ENCODE measurements at regions of chr17 and their contacts with region 1.

Region 1: DNA sequence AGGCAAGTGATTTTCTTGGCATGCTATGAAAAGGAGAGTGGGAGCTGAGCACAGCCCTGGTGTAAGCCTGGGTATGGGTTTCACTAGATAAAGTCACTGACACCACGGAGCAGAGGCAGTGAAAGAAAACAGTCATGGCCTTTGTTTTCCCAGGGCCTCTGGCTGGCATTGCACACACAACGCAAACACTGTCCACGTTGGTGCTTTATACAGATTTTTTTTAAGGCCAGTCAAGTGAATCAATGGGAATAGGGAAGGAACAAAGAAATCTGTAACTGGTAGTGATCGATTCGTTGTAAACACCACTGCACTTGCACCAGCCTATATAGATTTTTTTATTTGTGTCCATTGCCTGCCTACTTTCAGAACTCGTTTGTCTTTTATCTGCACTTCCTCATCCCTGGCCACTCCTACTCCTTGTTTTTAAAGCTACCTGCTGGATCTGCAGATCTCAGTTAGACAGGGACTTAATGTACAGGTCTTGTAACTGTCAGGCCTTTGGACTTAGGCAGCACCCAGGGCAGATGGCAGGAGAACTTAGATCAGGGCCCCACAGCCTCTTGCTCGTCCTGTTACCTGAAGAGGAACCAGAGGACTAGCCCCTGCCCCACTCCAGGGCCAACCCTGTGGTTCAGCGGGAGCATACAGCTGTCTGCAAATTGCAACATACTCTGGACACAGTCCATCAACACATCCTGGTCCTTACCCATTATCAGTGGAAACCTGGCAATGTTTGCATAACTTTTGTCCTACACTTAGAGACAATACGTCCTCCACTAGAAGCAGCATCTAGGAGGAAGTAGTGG is 10.6 kb upstream of the TMIGD1 start:
- DNase-seq: no peak
- ATAC-seq: no peak
- H3K4me3 ChIP-seq: no peak overlapping the region
- H3K27ac ChIP-seq: no peak overlapping the region
- H3K4me1 ChIP-seq: peaks cover 16 to 21% of the 10 kb centered on the region in 2 experiments; a peak in 3 of 4 replicates
- H3K27me3 ChIP-seq: no peaks in the 10 kb centered on the region
- CTCF ChIP-seq: no peak
- POLR2A ChIP-seq: no peak
- RAD21 ChIP-seq: no peak

Region 2: DNA sequence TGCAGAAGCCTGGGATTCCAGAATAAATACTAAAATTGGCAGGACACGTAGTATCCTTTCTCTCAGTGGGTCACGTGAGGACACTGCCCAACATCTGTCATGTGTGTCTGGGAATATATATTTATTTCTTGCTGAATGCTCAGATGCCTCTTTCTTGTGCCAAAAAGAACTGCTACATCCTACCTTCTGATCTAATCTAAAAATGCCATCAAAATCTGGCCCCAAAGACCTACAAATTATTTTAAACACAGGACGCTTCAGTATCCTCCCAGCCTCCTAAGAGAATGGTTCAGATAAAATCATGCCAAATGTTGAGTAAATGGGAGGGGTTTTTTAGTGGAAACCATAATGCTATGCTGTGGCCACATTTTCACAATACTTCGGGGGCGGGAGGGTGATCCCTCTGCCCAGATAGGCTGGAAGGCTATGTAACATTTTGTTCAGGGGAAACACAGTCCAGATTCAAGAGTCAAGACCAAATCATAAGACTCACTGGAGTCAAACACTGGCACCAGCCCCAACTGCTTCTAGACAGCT is 698.9 kb before region 1 on chr17:
- CTCF ChIA-PET with region 1: no interaction called
- POLR2A ChIA-PET with region 1: no interaction called
- RAD21 ChIA-PET with region 1: no interaction called
- intact Hi-C with region 1: no loop called
- DNase-seq: no peak
- ATAC-seq: no peak
- H3K4me3 ChIP-seq: no peak overlapping the region
- H3K27ac ChIP-seq: no peak overlapping the region
- H3K4me1 ChIP-seq: no peaks in the 10 kb centered on the region; a peak in 1 of 4 replicates
- H3K27me3 ChIP-seq: no peaks in the 10 kb centered on the region
- CTCF ChIP-seq: no peak
- POLR2A ChIP-seq: no peak
- RAD21 ChIP-seq: no peak

Region 3: GRCh38 chr17:30188211-30188939 is 156.1 kb before region 1 on chr17:
- CTCF ChIA-PET with region 1: no interaction called
- POLR2A ChIA-PET with region 1: no interaction called
- RAD21 ChIA-PET with region 1: no interaction called
- intact Hi-C with region 1: no loop called
- DNase-seq: no peak
- ATAC-seq: no peak
- H3K4me3 ChIP-seq: no peak overlapping the region
- H3K27ac ChIP-seq: no peak overlapping the region
- H3K4me1 ChIP-seq: no peaks in the 10 kb centered on the region
- H3K27me3 ChIP-seq: no peaks in the 10 kb centered on the region; the same call in 1 of the 2 replicates
- CTCF ChIP-seq: no peak
- POLR2A ChIP-seq: no peak
- RAD21 ChIP-seq: no peak

Region 4: GRCh38 chr17:30363715-30364202 is 19.3 kb after region 1 on chr17:
- CTCF ChIA-PET with region 1: no interaction called
- POLR2A ChIA-PET with region 1: no interaction called
- RAD21 ChIA-PET with region 1: no interaction called
- intact Hi-C with region 1: no loop called
- DNase-seq: no peak
- ATAC-seq: no peak
- H3K4me3 ChIP-seq: no peak overlapping the region
- H3K27ac ChIP-seq: no peak overlapping the region
- H3K4me1 ChIP-seq: peaks cover 0 to 10% of the 10 kb centered on the region in 2 experiments; a peak in 2 of 4 replicates
- H3K27me3 ChIP-seq: no peaks in the 10 kb centered on the region
- CTCF ChIP-seq: no peak
- POLR2A ChIP-seq: no peak
- RAD21 ChIP-seq: no peak

Region 5: GRCh38 chr17:30554839-30555751 is 210.6 kb after region 1 on chr17:
- CTCF ChIA-PET with region 1: interaction called, 3 read pairs
- POLR2A ChIA-PET with region 1: no interaction called
- RAD21 ChIA-PET with region 1: no interaction called
- intact Hi-C with region 1: loop called (anchors 5 kb)
- DNase-seq: peak; percentile 10
- ATAC-seq: peak; percentile 78
- H3K4me3 ChIP-seq: no peak overlapping the region
- H3K27ac ChIP-seq: no peak overlapping the region; the same call in 1 of the 2 replicates
- H3K4me1 ChIP-seq: peaks cover 12 to 20% of the 10 kb centered on the region in 2 experiments
- H3K27me3 ChIP-seq: no peaks in the 10 kb centered on the region
- CTCF ChIP-seq: peak; percentile 40 to 76 (median 42); a peak in 5 of 6 replicates
- POLR2A ChIP-seq: no peak
- RAD21 ChIP-seq: peak; percentile 76

Region 6: GRCh38 chr17:30716461-30717300 is 372.2 kb after region 1 on chr17:
- CTCF ChIA-PET with region 1: no interaction called
- POLR2A ChIA-PET with region 1: no interaction called
- RAD21 ChIA-PET with region 1: no interaction called
- intact Hi-C with region 1: loop called (anchors 2 kb)
- DNase-seq: no peak
- ATAC-seq: no peak
- H3K4me3 ChIP-seq: no peak overlapping the region
- H3K27ac ChIP-seq: no peak overlapping the region
- H3K4me1 ChIP-seq: peaks cover 3 to 11% of the 10 kb centered on the region in 2 experiments; a peak in 2 of 4 replicates
- H3K27me3 ChIP-seq: no peaks in the 10 kb centered on the region
- CTCF ChIP-seq: peak in 2 of 3 experiments; percentile 34 to 44; a peak in 2 of 6 replicates
- POLR2A ChIP-seq: no peak
- RAD21 ChIP-seq: peak; percentile 32; the same call in 1 of the 2 replicates

Region 7: DNA sequence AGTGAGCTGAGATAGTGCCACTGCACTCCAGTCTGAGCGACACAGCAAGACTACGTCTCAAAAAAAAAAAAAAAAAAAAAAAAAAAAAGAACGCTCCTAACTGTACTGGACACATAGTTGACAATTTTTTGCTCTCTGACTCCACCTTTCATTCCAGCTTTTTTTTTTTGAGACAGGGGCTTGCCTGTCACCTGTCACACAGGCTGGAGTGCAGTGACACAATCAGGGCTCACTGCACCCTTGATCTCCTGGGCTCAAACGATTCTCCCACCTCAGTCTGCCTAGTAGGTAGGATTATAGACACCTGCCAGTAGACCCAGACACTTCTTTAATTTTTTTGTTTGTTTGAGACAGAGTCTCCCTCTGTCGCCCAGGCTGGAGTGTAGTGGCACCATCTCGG is 482.6 kb after region 1 on chr17:
- CTCF ChIA-PET with region 1: interaction called, 4 read pairs
- POLR2A ChIA-PET with region 1: no interaction called
- RAD21 ChIA-PET with region 1: no interaction called
- intact Hi-C with region 1: loop called (anchors 2 kb)
- DNase-seq: no peak
- ATAC-seq: no peak
- H3K4me3 ChIP-seq: no peak overlapping the region
- H3K27ac ChIP-seq: no peak overlapping the region
- H3K4me1 ChIP-seq: peaks cover 17 to 41% of the 10 kb centered on the region in 2 experiments
- H3K27me3 ChIP-seq: no peaks in the 10 kb centered on the region
- CTCF ChIP-seq: no peak
- POLR2A ChIP-seq: no peak
- RAD21 ChIP-seq: no peak

Measured in HCT116 (cell line).